K562 (cell line): ENCODE measurements at regions of chr12 and their contacts with region 1.

Region 1: DNA sequence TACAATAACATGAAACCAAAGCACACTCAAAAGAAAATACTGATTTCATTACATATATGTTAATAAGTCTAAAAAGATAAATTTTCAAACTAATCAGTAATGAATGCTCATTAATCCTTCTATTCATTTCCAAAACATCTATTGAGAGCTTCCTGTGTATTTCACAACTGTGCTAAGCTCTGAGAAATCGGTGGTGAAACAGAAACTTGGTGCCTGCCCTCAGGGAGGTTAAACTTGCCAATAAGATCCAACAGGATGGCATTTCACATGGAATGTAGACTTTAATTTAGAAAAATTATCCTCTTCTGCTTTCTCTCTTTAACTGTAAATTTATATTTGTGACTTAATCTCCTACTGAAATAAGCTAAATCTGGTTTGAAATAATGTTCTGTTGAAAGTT is 70.9 kb upstream of the SLC38A4 start:
- DNase-seq: no peak
- ATAC-seq: no peak
- H3K4me3 ChIP-seq: no peak overlapping the region
- H3K27ac ChIP-seq: no peak overlapping the region
- H3K4me1 ChIP-seq: no peaks in the 10 kb centered on the region
- H3K27me3 ChIP-seq: no peaks in the 10 kb centered on the region; a peak in 1 of 5 replicates
- CTCF ChIP-seq: no peak
- EP300 ChIP-seq: no peak
- POLR2A ChIP-seq: no peak
- RAD21 ChIP-seq: no peak

Region 2: DNA sequence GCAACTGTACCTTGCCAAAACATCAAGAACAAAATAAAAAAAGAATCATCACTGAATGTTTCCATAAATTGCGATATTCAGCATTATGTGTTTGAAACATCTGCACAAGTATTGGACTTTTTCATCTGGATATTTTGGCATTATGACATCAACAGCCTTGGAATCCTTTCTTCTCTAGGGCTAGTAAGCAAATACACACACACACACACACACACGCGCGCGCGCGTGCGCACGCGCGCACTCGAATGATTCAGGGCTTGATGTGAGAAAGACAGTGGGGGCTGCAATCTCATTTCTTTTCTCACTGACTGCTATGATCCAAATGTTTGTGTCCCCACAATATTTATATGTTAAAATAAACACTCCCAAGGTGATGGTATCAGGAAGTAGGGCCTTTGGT is 19.2 kb after region 1 on chr12:
- CTCF ChIA-PET with region 1: no interaction called
- POLR2A ChIA-PET with region 1: interaction called, 3 read pairs
- in situ Hi-C with region 1: no loop called
- intact Hi-C with region 1: loop called (anchors 1 kb)
- DNase-seq: no peak
- ATAC-seq: no peak
- H3K4me3 ChIP-seq: no peak overlapping the region
- H3K27ac ChIP-seq: no peak overlapping the region
- H3K4me1 ChIP-seq: no peaks in the 10 kb centered on the region
- H3K27me3 ChIP-seq: no peaks in the 10 kb centered on the region
- CTCF ChIP-seq: no peak
- EP300 ChIP-seq: no peak
- POLR2A ChIP-seq: no peak
- RAD21 ChIP-seq: no peak